ENCODE measurements at regions of chr2 and their contacts with region 1.

Region 1: GRCh38 chr2:73112913-73113633 is at the start of gene RAB11FIP5:
- DNase-seq: no peak
- H3K4me3 ChIP-seq: peak within 1 kb of the TSS; percentile 91 to 100
- H3K27ac ChIP-seq: peak within 1 kb of the TSS; percentile 97
- H3K4me1 ChIP-seq: peaks cover 38% of the 10 kb centered on the region
- H3K27me3 ChIP-seq: no peaks in the 10 kb centered on the region
- CTCF ChIP-seq: no peak
- POLR2A ChIP-seq: peak in 1 of 2 donors; percentile 53
- total RNA-seq, gene RAB11FIP5: 33.1 TPM

Region 2: DNA sequence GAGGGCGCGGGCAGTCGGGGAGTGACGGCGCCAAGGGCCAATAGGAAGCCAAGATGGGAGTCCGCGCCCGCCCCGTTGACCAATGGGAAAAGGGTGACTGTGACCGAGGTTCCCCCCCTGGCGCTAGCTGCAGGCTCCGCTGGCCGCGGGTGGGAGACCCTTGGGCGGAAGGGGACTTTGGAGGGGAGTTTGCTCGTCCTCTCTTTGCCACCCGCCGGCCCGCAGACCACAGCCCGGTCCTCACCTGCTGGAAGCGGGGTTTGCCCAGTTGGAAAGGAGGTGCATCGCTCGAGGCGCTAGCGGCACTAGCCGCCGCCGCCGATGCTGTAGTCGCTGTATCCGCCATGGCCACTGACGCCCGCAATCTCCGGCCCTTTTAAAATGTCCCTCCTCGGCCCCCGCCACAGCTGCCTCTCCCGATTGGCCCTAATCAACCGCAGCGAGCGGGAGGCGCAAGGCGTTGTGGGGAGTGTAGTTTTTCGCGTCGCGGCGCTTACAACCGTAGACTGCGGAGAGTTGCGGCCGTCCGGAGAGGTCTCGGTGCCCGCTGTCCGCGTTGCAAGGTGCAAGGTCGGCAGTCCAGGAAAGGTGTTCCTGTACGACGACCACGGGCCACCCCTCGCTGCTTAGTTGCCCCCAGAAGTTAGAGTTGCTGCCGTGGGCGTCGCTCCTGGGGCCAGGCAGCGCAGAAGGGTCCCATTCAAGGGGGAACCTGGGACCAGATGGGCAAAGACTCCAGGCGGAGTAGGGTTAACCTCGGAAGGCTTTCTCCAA is 41.5 kb before region 1 on chr2 and contains the start of gene SFXN5:
- intact Hi-C with region 1: loop called (anchors 5 kb)
- DNase-seq: peak in 1 of 2 donors; percentile 97
- H3K4me3 ChIP-seq: peak within 1 kb of the TSS; percentile 92 to 96
- H3K27ac ChIP-seq: peak within 1 kb of the TSS; percentile 94
- H3K4me1 ChIP-seq: peaks cover 35% of the 10 kb centered on the region
- H3K27me3 ChIP-seq: no peaks in the 10 kb centered on the region
- CTCF ChIP-seq: no peak
- POLR2A ChIP-seq: no peak
- total RNA-seq, gene SFXN5: 9.8 TPM